IMR-90 (cell line): ENCODE measurements at regions of chr17 and their contacts with region 1.

Region 1: DNA sequence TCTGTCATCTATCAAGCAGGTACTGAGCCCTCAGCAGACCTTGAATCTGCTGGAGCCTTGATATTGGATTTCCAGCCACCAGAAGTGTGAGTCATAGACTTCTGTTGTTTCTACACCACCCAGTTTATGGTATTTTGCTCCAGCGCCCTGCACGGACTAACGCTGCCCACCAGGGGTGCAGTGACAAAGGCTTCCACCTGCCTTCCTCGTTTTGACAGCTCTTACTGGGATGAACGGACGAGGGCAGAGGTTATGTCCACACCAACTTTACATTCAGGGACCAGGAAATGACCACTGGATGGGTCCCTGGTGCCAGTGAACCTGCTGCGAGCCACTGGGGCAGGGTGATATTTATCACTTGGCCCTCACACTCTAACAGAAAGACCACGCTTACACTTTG is 66.6 kb upstream of the CBX4 start:
- DNase-seq: no peak
- ATAC-seq: no peak
- H3K4me3 ChIP-seq: no peak overlapping the region
- H3K27ac ChIP-seq: no peak overlapping the region
- H3K4me1 ChIP-seq: no peaks in the 10 kb centered on the region
- H3K27me3 ChIP-seq: peaks cover 48% of the 10 kb centered on the region
- CTCF ChIP-seq: no peak
- POLR2A ChIP-seq: no peak
- RAD21 ChIP-seq: no peak

Region 2: GRCh38 chr17:79850571-79851461 is 55.0 kb before region 1 on chr17:
- CTCF ChIA-PET with region 1: no interaction called
- POLR2A ChIA-PET with region 1: no interaction called
- dilution Hi-C with region 1: no loop called
- in situ Hi-C with region 1: no loop called
- intact Hi-C with region 1: loop called (anchors 10 kb)
- DNase-seq: peak; percentile 86
- ATAC-seq: peak; percentile 90
- H3K4me3 ChIP-seq: no peak overlapping the region
- H3K27ac ChIP-seq: no peak overlapping the region
- H3K4me1 ChIP-seq: peaks cover 6% of the 10 kb centered on the region
- H3K27me3 ChIP-seq: peaks cover 2% of the 10 kb centered on the region; the same call in 1 of the 2 replicates
- CTCF ChIP-seq: no peak
- POLR2A ChIP-seq: no peak
- RAD21 ChIP-seq: no peak